ENCODE measurements at regions of chr17 and their contacts with region 1.

Region 1: DNA sequence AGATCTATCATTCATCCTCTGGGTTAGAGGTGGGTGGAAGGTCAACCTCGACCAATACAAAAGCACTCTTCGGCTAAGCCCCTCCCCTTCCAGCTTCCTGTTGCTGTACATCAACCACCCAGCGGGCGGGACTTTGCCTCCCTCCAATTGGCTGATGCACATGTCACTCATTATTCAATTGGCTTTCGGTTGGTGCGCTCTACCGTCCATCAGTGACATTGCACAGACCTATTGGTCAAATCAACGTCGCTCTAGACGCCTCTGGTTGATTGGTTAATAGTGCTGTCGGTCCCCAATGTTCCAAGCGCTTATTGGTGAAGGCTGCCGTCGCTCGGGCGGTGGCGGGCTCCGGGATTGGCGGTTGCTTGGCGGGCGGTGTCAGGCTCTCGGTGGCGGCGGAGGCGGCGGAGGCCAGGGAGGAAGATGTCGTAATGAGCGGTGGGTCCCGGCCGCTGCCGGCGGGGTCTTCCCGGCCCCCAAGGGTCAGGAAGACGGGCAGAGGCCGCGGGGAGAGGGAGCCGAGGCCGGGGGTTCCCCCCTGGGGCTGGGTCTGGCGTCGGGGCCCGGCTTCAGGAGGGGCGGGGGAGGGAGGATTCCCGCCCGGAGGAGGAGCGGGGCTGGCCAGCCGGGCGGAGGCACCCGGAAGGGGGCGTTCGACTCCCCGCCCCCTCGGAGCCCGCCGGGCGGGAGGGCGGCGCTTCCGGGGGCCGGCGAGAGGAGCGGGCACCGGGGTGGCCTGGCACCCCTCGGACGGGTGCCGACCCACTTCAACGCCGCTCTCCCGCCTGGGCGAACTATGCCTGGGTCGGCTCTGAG is at the start of gene SP2:
- DNase-seq: peak; percentile 99 to 100
- H3K4me3 ChIP-seq: peak within 1 kb of the TSS; percentile 94
- H3K4me1 ChIP-seq: no peaks in the 10 kb centered on the region
- H3K27me3 ChIP-seq: no peaks in the 10 kb centered on the region

Region 2: GRCh38 chr17:47776330-47777197 is 119.5 kb before region 1 on chr17:
- in situ Hi-C with region 1: loop called (anchors 10 kb)
- DNase-seq: peak; percentile 37 to 49
- H3K4me3 ChIP-seq: no peak overlapping the region
- H3K4me1 ChIP-seq: no peaks in the 10 kb centered on the region
- H3K27me3 ChIP-seq: peaks cover 5% of the 10 kb centered on the region

Region 3: DNA sequence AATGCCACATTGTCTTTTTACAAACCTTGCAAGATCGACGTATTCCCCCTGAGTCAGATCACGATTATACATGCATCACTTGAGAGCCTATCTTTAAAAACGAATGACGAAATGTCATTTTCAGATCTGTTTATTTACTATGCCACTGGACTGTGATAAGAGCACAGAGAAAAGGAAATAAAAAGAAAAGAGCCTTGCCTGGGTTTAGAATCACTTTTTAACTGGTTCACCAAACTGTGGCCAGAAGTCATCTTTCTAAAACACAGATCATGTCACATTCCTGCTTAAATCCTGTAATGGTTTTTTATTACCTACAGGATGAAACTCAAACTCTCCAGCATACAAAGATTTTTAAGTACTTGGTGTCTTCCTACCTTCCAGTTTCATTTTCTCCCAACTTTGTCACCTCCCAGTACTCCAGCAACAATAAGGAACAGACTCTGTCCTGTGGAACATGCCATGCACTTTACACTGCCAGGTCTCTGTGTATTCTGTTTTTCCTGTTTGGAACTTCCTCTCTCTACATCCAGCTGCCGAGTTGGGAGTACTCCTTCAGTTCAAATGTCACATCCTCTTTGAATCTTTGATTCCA is 303.0 kb after region 1 on chr17:
- in situ Hi-C with region 1: no loop called
- DNase-seq: no peak
- H3K4me3 ChIP-seq: no peak overlapping the region
- H3K4me1 ChIP-seq: peaks cover 6% of the 10 kb centered on the region
- H3K27me3 ChIP-seq: peaks cover 33% of the 10 kb centered on the region